Calu3 (cell line): ENCODE measurements at regions of chr7 and their contacts with region 1.

Region 1: GRCh38 chr7:94657771-94658693 is 2.1 kb upstream of the SGCE start:
- DNase-seq: peak; percentile 92
- H3K4me3 Mint-ChIP-seq: peak overlapping the region; percentile 91
- H3K27ac Mint-ChIP-seq: peak overlapping the region; percentile 73
- H3K4me1 Mint-ChIP-seq: peaks cover 8% of the 10 kb centered on the region
- H3K27me3 Mint-ChIP-seq: no peaks in the 10 kb centered on the region
- CTCF ChIP-seq: no peak

Region 2: DNA sequence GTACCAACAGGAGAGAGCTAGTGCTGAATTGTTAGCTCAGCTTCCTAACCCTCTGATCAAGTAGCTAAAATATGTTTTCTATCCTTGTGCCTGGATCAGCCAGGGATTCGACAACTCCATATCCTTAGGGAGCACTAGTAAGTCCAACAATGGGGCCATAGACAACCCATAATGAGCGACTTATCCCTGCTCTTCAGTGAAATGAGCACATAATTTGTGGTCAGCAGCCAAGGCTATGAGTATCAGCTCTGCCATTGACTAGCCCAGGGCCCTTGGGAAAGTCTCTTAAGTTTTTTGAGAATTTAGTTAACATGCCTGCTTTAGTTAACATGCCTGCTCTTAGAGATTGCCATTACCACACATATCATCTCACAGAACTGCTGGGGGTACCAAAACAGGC is 224.0 kb before region 1 on chr7:
- CTCF ChIA-PET with region 1: no interaction called
- intact Hi-C with region 1: no loop called
- DNase-seq: no peak
- H3K4me3 Mint-ChIP-seq: no peak overlapping the region
- H3K27ac Mint-ChIP-seq: no peak overlapping the region
- H3K4me1 Mint-ChIP-seq: no peaks in the 10 kb centered on the region
- H3K27me3 Mint-ChIP-seq: no peaks in the 10 kb centered on the region
- CTCF ChIP-seq: no peak

Region 3: DNA sequence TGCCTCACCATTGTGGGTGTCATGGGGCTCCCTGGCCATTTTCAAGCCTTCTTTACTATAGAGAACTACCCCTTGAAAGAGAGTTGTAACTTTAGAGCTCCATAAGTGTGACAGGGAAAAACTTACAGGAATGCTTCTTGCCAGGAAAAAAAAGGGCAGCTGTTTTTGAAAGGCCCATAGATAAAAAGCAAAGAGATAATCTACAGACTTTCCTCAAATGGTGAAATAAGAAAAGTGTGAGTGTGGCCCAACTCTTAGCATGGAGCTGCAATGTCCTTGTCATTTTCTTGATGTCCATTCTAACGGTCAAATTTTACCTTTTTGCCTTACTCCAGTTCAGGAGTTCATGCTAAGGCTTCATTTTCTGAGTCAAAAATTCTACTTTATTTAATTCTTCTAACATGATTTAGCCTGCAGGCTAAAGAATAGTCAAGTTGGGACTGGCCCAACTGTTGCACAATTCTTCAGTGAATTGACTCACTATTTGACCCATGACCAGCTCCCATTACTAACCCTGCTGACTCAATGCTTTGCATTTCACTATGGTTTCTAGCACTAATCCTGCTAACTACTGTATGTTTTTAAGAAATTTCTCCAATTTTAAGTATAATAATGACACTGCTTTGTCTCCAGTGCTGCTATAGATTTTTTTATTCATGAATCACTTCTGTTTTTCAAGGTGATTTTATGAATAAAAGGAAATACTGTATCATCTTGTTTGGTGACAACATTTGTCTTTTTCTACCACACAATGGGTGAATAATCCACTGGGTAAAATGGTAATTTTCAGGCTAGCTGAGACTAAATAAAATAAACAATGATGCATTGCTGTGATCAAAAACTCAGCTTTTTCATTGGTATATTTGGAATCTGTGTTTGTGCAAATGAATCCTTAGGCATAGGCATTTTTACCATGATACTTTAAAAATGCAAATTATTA is 39.3 kb after region 1 on chr7:
- CTCF ChIA-PET with region 1: interaction called, 3 read pairs
- intact Hi-C with region 1: loop called (anchors 5 kb)
- DNase-seq: peak; percentile 48
- H3K4me3 Mint-ChIP-seq: no peak overlapping the region
- H3K27ac Mint-ChIP-seq: no peak overlapping the region
- H3K4me1 Mint-ChIP-seq: peaks cover 13% of the 10 kb centered on the region
- H3K27me3 Mint-ChIP-seq: no peaks in the 10 kb centered on the region
- CTCF ChIP-seq: no peak

Region 4: GRCh38 chr7:94907026-94907810 is 249.2 kb after region 1 on chr7 and contains the start of gene PPP1R9A:
- CTCF ChIA-PET with region 1: no interaction called
- intact Hi-C with region 1: loop called (anchors 5 kb)
- DNase-seq: peak; percentile 68
- H3K4me3 Mint-ChIP-seq: peak within 1 kb of the TSS; percentile 89
- H3K27ac Mint-ChIP-seq: peak within 1 kb of the TSS; percentile 71
- H3K4me1 Mint-ChIP-seq: peaks cover 23% of the 10 kb centered on the region
- H3K27me3 Mint-ChIP-seq: no peaks in the 10 kb centered on the region
- CTCF ChIP-seq: no peak
- total RNA-seq, gene PPP1R9A: 17.9 and 19.4 TPM in 2 replicates

Region 5: DNA sequence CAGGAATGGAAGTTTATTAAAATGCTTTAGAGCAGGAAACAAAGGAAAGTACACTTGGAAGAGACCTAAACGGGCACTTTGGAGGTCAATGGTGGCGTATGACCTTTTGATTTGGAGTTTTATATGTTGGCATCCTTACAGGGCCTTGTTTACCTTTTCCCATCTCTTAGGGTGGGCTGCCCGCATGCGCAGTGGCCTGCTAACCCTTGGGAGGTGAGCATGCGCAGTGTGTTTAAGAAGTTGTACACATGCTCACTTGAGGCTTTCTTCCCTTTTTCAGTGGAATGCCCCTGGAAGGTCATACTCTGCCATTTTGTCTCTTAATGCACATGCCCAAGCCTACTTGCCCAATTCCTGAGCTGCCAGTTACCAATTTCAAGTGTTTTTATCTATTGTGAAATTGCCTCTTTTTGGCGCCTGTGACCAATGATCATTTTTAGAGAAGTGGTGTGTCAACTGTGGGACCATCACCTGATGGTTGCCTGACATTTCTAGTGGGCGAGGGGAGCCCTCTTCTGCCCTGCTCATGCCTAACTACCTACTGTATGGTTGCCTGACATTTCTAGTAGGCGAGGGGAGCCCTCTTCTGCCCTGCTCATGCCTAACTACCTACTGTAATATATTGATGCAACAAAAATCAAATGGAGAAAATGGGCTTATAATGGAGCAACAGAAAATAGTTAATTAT is 387.3 kb after region 1 on chr7:
- CTCF ChIA-PET with region 1: no interaction called
- intact Hi-C with region 1: loop called (anchors 10 kb)
- DNase-seq: peak; percentile 51
- H3K4me3 Mint-ChIP-seq: no peak overlapping the region
- H3K27ac Mint-ChIP-seq: no peak overlapping the region
- H3K4me1 Mint-ChIP-seq: no peaks in the 10 kb centered on the region
- H3K27me3 Mint-ChIP-seq: no peaks in the 10 kb centered on the region
- CTCF ChIP-seq: peak; percentile 31